HEK293 (cell line): ENCODE measurements at regions of chr12 and their contacts with region 1.

Region 1: GRCh38 chr12:55838361-55838760 is 4.4 kb downstream of the MMP19 start:
- H3K4me3 ChIP-seq: no peak overlapping the region
- H3K27ac ChIP-seq: no peak overlapping the region
- H3K4me1 ChIP-seq: no peaks in the 10 kb centered on the region
- CTCF ChIP-seq: no peak

Region 2: GRCh38 chr12:55745361-55746146 is 92.8 kb before region 1 on chr12:
- CTCF ChIA-PET with region 1: no interaction called
- POLR2A ChIA-PET with region 1: no interaction called
- H3K4me3 ChIP-seq: no peak overlapping the region
- H3K27ac ChIP-seq: peak overlapping the region; percentile 36; the same call in 1 of the 2 replicates
- H3K4me1 ChIP-seq: peaks cover 12% of the 10 kb centered on the region; the same call in 1 of the 2 replicates
- CTCF ChIP-seq: no peak

Region 3: DNA sequence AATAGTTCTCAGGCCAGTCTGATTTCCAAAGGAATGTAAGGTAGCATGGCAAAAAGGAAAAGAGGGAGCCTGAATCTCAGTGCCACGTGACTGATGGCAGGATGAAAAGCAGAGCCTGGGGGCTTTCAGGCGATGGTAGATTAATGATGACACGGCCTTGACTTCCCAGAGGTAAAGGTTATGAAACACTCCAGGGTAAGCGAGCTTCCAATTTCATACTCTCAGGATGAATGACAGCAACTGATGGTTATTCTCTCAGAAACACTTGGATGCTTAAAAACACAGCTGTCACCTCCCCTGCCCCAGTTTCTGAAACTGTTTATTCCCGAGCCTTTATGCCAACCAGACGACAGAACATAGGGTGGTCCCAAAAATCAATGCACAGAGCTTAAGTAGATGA is 66.6 kb before region 1 on chr12:
- CTCF ChIA-PET with region 1: no interaction called
- POLR2A ChIA-PET with region 1: no interaction called
- H3K4me3 ChIP-seq: no peak overlapping the region
- H3K27ac ChIP-seq: no peak overlapping the region
- H3K4me1 ChIP-seq: no peaks in the 10 kb centered on the region
- CTCF ChIP-seq: no peak

Region 4: GRCh38 chr12:55875704-55876467 is 37.5 kb after region 1 on chr12:
- CTCF ChIA-PET with region 1: interaction called, 3 read pairs
- POLR2A ChIA-PET with region 1: interaction called, 15 read pairs
- H3K4me3 ChIP-seq: no peak overlapping the region
- H3K27ac ChIP-seq: no peak overlapping the region
- H3K4me1 ChIP-seq: no peaks in the 10 kb centered on the region
- CTCF ChIP-seq: no peak